Activated CD4-positive, alpha-beta memory T cell treated with anti-CD3 and anti-CD28 coated beads, Interleukin-2, amount 10 ng/mL, durations not matched to agents 7 days and 5 days (primary cell): ENCODE measurements at regions of chr5 and their contacts with region 1.

Region 1: DNA sequence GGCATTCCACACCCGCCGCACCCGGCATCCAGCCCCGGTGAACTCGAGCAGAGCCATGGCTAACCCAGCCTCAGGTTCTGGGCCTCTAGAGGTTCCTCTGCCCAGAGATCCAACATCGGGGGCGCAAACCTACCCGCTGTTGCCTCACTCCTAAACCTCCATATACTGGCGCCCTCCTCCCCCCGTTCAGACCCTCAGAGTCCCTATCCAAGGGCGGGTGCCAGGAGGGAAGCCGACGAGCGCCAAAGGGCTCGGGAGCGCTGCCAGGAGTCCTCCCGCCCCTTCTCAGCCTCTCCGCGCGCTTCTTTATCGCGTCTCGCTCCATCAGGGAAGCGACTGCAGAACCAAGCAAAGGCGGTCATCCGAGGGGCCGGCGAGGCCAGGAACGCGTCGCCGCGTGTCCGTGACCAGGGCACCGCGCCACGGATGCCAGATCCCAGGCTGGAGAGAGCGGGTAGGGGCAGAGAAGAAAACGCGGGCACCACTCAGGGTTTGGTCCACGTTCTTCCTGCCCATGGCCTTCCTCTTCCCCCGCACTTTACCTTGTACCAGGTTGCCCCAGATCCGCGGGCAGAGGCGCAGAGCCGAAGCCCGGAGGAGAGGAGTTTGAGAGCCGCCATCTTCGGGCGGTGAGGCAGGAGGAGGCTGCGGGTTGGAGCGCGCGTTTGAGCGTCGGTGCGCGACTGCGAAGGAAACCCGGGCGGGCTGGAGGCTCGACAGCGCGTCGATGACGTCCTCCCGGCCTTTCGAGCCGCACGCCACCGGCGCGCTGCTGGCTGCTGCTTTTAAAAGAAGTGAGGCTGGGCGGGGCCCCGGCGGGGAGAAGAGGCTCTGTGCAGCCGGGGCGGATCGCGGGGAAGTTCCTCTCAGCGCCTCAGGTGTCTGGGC is at the start of gene OXCT1:
- DNase-seq: peak; percentile 95
- H3K4me3 Mint-ChIP-seq: peak within 1 kb of the TSS; percentile 90
- H3K27ac Mint-ChIP-seq: peak within 1 kb of the TSS; percentile 86
- H3K4me1 Mint-ChIP-seq: peaks cover 56% of the 10 kb centered on the region
- H3K27me3 Mint-ChIP-seq: no peaks in the 10 kb centered on the region
- total RNA-seq, gene OXCT1: 63.8 to 64.2 TPM

Region 2: GRCh38 chr5:41893074-41893851 is 23.3 kb after region 1 on chr5:
- CTCF ChIA-PET with region 1: interaction called, 3 read pairs
- POLR2A ChIA-PET with region 1: interaction called, 10 read pairs
- DNase-seq: no peak
- H3K4me3 Mint-ChIP-seq: peak overlapping the region; percentile 38
- H3K27ac Mint-ChIP-seq: peak overlapping the region; percentile 45
- H3K4me1 Mint-ChIP-seq: peaks cover 24% of the 10 kb centered on the region
- H3K27me3 Mint-ChIP-seq: peaks cover 21% of the 10 kb centered on the region

Region 3: GRCh38 chr5:41924872-41925554 is 55.0 kb after region 1 on chr5 and contains the start of gene FBXO4:
- CTCF ChIA-PET with region 1: interaction called, 6 read pairs
- POLR2A ChIA-PET with region 1: interaction called, 31 read pairs
- DNase-seq: peak; percentile 90
- H3K4me3 Mint-ChIP-seq: peak within 1 kb of the TSS; percentile 87
- H3K27ac Mint-ChIP-seq: peak within 1 kb of the TSS; percentile 92
- H3K4me1 Mint-ChIP-seq: peaks cover 19% of the 10 kb centered on the region
- H3K27me3 Mint-ChIP-seq: no peaks in the 10 kb centered on the region
- total RNA-seq, gene FBXO4: 13.3 to 13.6 TPM